Lower lobe of right lung (tissue), 2 donors: ENCODE measurements at regions of chr15 and their contacts with region 1.

Region 1: DNA sequence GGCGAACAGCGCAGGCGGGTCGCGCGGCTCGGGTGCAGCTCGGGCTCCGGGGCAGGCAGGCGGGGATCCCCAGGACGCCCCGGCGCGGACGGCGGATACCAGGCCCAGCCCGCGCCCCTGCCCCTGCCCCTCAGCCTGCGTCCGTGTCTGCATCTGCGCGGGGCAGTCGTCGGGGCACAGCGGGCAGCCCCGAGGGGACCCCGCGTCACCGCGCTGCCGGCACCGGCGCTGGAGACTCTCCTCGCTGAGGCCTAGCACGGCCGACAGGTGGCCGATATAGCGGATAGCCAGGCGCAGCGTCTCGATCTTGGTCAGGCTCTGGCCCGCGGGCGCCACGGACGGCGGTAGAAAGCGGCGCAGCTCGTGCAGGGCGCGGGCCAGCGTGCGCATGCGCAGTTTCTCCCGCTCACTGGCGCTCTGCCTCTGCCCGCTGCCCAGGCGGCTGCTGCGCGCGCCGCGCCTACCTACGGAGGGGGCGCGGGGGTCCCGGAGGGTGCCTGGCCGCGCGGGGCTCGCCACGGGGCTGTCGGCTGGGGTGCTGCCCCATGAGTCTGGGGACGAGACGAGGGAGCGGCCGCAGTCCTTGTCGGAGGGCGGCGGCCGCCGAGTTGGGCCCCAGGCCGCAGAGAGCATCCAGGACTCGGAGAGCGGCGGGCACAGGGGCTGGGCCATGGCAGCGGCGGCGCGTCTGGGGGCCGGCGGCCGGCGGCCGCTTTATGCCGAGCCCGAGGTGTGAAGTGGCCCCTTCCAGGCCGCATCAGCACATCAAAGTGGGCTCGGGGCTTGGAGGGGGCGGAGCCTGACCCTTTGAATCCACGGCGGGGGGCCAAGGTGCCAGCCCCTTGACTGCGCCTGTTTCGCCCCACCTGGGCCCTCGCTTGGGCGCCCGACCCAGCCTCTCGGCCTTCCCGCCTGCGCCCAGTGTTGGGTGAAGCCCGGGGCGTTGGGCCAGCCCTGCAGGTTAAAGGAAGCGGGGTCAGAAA is at the start of gene MESP1:
- DNase-seq: peak; percentile 97
- ATAC-seq: peak; percentile 96
- H3K4me3 ChIP-seq: peak within 1 kb of the TSS; percentile 78
- H3K27ac ChIP-seq: peak within 1 kb of the TSS; percentile 54
- H3K4me1 ChIP-seq: peaks cover 16% of the 10 kb centered on the region
- H3K27me3 ChIP-seq: peaks cover 21% of the 10 kb centered on the region
- CTCF ChIP-seq: peak; percentile 87
- total RNA-seq, gene MESP1: 0.53 TPM

Region 2: DNA sequence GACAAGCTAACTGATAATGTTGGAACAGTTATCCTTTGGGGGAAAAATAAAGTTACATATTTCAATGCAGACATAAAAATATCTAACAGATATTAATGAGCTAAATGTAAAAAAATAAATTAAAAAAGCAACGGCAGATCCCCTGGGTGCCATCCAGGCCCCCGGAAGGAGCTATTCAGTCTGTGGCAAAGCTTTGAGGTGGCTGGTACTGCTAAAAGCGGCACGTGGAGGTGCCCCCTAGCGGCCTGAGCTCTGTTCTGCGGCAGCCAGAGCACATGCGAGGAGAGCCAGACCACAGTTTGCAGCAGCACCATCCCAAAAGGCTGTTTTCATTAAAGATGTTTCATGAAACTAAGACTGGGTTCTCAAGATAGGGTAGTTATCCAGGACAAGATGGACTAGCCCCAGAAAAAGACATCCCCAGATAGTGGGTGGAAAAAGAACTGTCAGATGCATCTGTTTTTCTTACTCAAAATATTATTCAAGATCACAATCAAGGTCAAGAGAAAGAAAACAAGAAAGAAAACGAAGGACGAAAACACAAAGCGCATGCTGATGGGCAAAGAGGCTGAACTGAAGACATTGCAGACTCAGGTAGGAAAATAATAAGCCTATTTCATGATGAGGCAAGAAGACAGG is 124.2 kb after region 1 on chr15:
- intact Hi-C with region 1: loop called (anchors 10 kb)
- DNase-seq: peak; percentile 89
- ATAC-seq: peak; percentile 94
- H3K4me3 ChIP-seq: no peak overlapping the region
- H3K27ac ChIP-seq: no peak overlapping the region
- H3K4me1 ChIP-seq: no peaks in the 10 kb centered on the region
- H3K27me3 ChIP-seq: no peaks in the 10 kb centered on the region
- CTCF ChIP-seq: peak; percentile 96